ENCODE measurements at regions of chr6 and their contacts with region 1.

Region 1: DNA sequence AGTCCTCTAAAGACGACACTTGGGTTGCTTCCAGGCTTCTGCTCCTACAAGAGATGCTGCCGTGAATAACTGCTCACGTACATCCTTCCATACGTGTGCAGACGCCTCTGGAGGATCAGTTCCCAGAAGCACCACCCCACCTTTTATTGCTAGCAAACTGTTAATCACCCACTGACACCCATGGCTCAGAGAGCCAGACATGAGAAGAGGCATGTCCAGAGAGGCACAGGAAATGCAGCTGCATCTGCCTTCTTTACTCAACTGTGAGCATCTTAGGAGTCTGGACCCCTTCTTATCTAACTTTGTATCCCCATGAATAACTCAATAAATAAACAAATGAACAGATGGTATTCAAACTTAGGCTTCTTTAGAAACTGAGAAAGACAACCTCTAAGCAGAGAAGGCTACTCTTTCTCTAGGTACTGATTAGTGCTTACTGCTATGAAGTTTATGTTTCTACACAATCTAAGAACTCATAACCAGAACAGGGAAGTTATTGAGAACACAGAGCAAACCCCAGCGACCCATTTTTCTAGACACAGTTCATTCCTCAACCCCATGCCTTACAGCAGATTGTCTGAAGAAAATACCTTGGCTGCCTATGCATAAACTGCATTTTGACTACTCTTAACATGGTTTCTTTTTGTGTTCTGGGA is 228.7 kb upstream of the RREB1 start:
- DNase-seq: peak in 1 of 3 donors; percentile 38
- H3K4me3 ChIP-seq: no peak overlapping the region
- H3K4me3 Mint-ChIP-seq: no peak overlapping the region
- H3K27ac ChIP-seq: peak overlapping the region; percentile 76 to 81
- H3K27ac Mint-ChIP-seq: peak overlapping the region; percentile 92 to 99 (median 96)
- H3K4me1 ChIP-seq: peaks cover 65 to 80% of the 10 kb centered on the region in 2 donors
- H3K4me1 Mint-ChIP-seq: peaks cover 71% of the 10 kb centered on the region
- H3K27me3 ChIP-seq: no peaks in the 10 kb centered on the region
- H3K27me3 Mint-ChIP-seq: peaks cover 0 to 9% (median 0%) of the 10 kb centered on the region in 3 donors
- CTCF ChIP-seq: no peak

Region 2: GRCh38 chr6:6366803-6367202 is 512.2 kb before region 1 on chr6:
- intact Hi-C with region 1: no loop called
- DNase-seq: no peak
- H3K4me3 ChIP-seq: no peak overlapping the region
- H3K4me3 Mint-ChIP-seq: no peak overlapping the region
- H3K27ac ChIP-seq: no peak overlapping the region
- H3K27ac Mint-ChIP-seq: no peak overlapping the region
- H3K4me1 ChIP-seq: peaks cover 14 to 15% of the 10 kb centered on the region in 2 donors
- H3K4me1 Mint-ChIP-seq: peaks cover 13% of the 10 kb centered on the region
- H3K27me3 ChIP-seq: no peaks in the 10 kb centered on the region
- H3K27me3 Mint-ChIP-seq: peaks cover 0 to 3% (median 0%) of the 10 kb centered on the region in 3 donors
- CTCF ChIP-seq: no peak

Region 3: GRCh38 chr6:6793388-6794250 is 85.4 kb before region 1 on chr6:
- intact Hi-C with region 1: loop called in 1 of 2 experiments (anchors 2 kb)
- DNase-seq: peak; percentile 79 to 93 (median 90)
- H3K4me3 ChIP-seq: peak overlapping the region in 1 of 3 experiments; percentile 29
- H3K4me3 Mint-ChIP-seq: peak overlapping the region; percentile 53 to 74
- H3K27ac ChIP-seq: peak overlapping the region; percentile 50 to 75
- H3K27ac Mint-ChIP-seq: peak overlapping the region; percentile 84 to 99 (median 96)
- H3K4me1 ChIP-seq: peaks cover 60% of the 10 kb centered on the region in 2 donors
- H3K4me1 Mint-ChIP-seq: peaks cover 62% of the 10 kb centered on the region
- H3K27me3 ChIP-seq: no peaks in the 10 kb centered on the region
- H3K27me3 Mint-ChIP-seq: peaks cover 0 to 5% (median 3%) of the 10 kb centered on the region in 3 donors
- CTCF ChIP-seq: no peak

Region 4: GRCh38 chr6:6942831-6943230 is 63.8 kb after region 1 on chr6:
- intact Hi-C with region 1: no loop called
- DNase-seq: peak; percentile 56 to 66 (median 62)
- H3K4me3 ChIP-seq: peak overlapping the region in 2 of 3 experiments; percentile 7 to 59
- H3K4me3 Mint-ChIP-seq: peak overlapping the region; percentile 84 to 91
- H3K27ac ChIP-seq: peak overlapping the region in 1 of 2 donors; percentile 22
- H3K27ac Mint-ChIP-seq: peak overlapping the region in 6 of 7 donors; percentile 4 to 92 (median 71)
- H3K4me1 ChIP-seq: peaks cover 10 to 14% of the 10 kb centered on the region in 2 donors
- H3K4me1 Mint-ChIP-seq: peaks cover 17% of the 10 kb centered on the region
- H3K27me3 ChIP-seq: no peaks in the 10 kb centered on the region
- H3K27me3 Mint-ChIP-seq: peaks cover 0 to 3% (median 1%) of the 10 kb centered on the region in 3 donors
- CTCF ChIP-seq: no peak

Region 5: DNA sequence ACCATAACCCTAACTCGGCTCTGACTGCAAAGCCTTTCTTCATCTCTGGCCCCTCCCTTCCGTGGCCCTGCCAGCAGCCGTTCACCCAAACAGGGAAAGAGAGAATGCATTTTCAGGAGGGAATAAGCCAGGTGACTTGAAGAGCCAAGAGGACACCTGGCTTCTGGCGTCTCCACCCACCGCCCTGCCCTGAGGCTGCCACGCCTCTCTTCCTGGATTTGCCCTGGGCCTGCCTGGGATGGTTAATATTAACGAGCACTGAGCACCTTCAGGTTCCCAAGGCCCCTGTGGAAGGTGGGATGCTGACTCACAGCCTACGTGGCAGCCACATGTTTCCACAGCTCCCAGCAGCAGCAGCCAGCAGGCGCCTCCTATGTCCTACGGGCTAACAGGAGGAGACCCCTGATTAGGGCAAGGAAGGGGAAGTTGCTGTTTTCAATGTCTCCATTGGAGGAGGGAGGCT is 90.7 kb after region 1 on chr6:
- intact Hi-C with region 1: no loop called
- DNase-seq: no peak
- H3K4me3 ChIP-seq: no peak overlapping the region
- H3K4me3 Mint-ChIP-seq: no peak overlapping the region
- H3K27ac ChIP-seq: no peak overlapping the region
- H3K27ac Mint-ChIP-seq: no peak overlapping the region
- H3K4me1 ChIP-seq: no peaks in the 10 kb centered on the region
- H3K4me1 Mint-ChIP-seq: no peaks in the 10 kb centered on the region
- H3K27me3 ChIP-seq: no peaks in the 10 kb centered on the region
- H3K27me3 Mint-ChIP-seq: no peaks in the 10 kb centered on the region
- CTCF ChIP-seq: no peak

Measured in CD14-positive monocyte (primary cell).